MCF 10A (cell line): ENCODE measurements at regions of chr10 and their contacts with region 1.

Region 1: DNA sequence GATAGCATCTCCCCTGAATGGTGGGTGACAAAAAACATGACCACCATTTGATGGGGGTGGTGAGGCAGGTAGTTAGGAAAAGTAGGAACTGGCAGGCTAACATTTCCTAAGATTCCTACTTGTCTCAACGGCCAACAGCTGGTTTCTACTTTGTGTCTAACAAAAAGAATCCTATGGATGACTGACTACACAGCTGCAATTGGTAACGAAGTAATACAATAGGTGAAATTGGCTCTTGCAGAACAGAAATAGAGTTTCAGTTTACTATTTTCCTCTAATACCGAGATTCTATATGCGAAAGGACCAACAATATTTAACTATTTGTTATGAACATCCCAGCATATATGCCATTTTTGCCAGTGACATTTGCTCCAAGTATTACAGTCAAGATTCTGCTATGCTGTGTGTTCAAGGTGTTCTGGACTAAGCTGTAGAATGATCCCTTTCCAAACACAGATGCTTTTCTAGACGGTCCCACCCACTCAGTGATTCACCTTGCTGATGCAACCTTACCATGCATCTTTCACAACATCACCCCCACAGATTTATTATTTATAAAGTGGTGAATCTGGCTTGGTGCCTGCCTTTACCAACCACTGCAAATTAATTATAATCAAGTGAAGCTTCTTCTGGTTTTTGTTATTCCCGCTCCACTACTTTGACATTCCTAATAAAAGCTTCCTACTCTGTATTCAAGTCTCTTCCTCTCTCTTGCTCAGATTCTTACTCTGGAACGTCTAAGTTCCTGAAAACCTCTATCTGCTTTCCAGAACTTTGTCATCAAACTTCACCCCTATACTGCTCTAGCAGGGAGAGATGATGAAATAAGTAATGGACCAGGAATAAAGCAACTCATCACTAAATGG is 16.8 kb downstream of the BBIP1 start:
- DNase-seq: peak; percentile 93
- H3K4me3 Mint-ChIP-seq: peak overlapping the region; percentile 2
- H3K27ac Mint-ChIP-seq: peak overlapping the region; percentile 4
- H3K4me1 Mint-ChIP-seq: peaks cover 20% of the 10 kb centered on the region
- H3K27me3 Mint-ChIP-seq: no peaks in the 10 kb centered on the region
- CTCF ChIP-seq: no peak

Region 2: GRCh38 chr10:110912374-110912773 is 10.2 kb after region 1 on chr10:
- CTCF ChIA-PET with region 1: interaction called, 3 read pairs
- POLR2A ChIA-PET with region 1: interaction called, 129 read pairs
- intact Hi-C with region 1: no loop called
- DNase-seq: peak; percentile 27
- H3K4me3 Mint-ChIP-seq: no peak overlapping the region
- H3K27ac Mint-ChIP-seq: peak overlapping the region; percentile 54
- H3K4me1 Mint-ChIP-seq: peaks cover 38% of the 10 kb centered on the region
- H3K27me3 Mint-ChIP-seq: no peaks in the 10 kb centered on the region
- CTCF ChIP-seq: no peak

Region 3: DNA sequence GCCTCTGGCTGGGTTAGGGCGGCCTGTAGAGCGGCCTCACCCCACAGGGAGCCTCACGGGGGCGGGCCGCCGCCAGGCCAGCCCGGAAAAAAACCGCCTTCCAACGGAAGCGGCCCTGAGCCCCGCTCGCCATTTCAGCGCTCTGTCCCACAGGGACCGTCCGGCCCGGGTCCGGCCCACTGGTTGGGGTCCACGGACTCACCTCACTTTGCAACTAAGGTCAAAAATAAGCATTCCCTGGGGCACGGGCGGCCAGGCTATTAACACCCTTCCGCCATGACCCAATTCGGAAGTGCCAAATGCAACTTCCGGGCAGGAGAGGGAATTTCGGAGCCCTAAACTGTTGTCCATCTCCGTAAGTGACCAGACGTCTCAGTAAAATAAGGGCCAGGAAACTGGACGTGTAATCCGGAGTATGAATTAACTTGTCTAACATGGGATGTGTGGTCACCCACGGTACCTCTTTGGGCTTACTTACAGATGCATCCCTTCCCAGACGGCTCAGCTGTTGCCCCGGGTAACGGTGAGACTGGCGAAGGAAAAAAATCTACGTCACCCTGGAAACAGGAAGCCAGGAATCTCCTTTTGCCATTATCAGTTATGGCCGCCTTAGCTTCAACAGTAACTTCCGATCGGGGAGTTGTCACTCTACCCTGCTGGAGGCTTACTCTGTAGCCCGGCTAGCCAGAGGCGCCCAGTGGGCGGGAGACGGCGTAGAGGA is 16.6 kb after region 1 on chr10 and contains the start of gene BBIP1:
- CTCF ChIA-PET with region 1: interaction called, 3 read pairs
- POLR2A ChIA-PET with region 1: interaction called, 129 read pairs
- intact Hi-C with region 1: loop called (anchors 2 kb)
- DNase-seq: peak; percentile 100
- H3K4me3 Mint-ChIP-seq: peak within 1 kb of the TSS; percentile 89
- H3K27ac Mint-ChIP-seq: peak within 1 kb of the TSS; percentile 100
- H3K4me1 Mint-ChIP-seq: peaks cover 22% of the 10 kb centered on the region
- H3K27me3 Mint-ChIP-seq: no peaks in the 10 kb centered on the region
- CTCF ChIP-seq: no peak
- total RNA-seq, gene BBIP1: 46.9 and 68.7 TPM in 2 replicates

Region 4: GRCh38 chr10:110967645-110968044 is 65.5 kb after region 1 on chr10:
- CTCF ChIA-PET with region 1: no interaction called
- POLR2A ChIA-PET with region 1: no interaction called
- intact Hi-C with region 1: no loop called
- DNase-seq: no peak
- H3K4me3 Mint-ChIP-seq: no peak overlapping the region
- H3K27ac Mint-ChIP-seq: no peak overlapping the region
- H3K4me1 Mint-ChIP-seq: peaks cover 27% of the 10 kb centered on the region
- H3K27me3 Mint-ChIP-seq: no peaks in the 10 kb centered on the region
- CTCF ChIP-seq: no peak

Region 5: GRCh38 chr10:111458256-111458655 is 556.1 kb after region 1 on chr10:
- CTCF ChIA-PET with region 1: no interaction called
- POLR2A ChIA-PET with region 1: no interaction called
- intact Hi-C with region 1: no loop called
- DNase-seq: no peak
- H3K4me3 Mint-ChIP-seq: no peak overlapping the region
- H3K27ac Mint-ChIP-seq: no peak overlapping the region
- H3K4me1 Mint-ChIP-seq: no peaks in the 10 kb centered on the region
- H3K27me3 Mint-ChIP-seq: no peaks in the 10 kb centered on the region
- CTCF ChIP-seq: no peak